Thyroid gland (tissue), 4 donors: ENCODE measurements at regions of chr22 and their contacts with region 1.

Region 1: GRCh38 chr22:50148991-50149721 is 21.4 kb upstream of the PANX2 start:
- DNase-seq: peak; percentile 52 to 57
- H3K4me3 ChIP-seq: no peak overlapping the region
- H3K27ac ChIP-seq: no peak overlapping the region
- H3K4me1 ChIP-seq: no peaks in the 10 kb centered on the region
- H3K27me3 ChIP-seq: no peaks in the 10 kb centered on the region
- CTCF ChIP-seq: peak; percentile 31 to 72 (median 62)
- POLR2A ChIP-seq: no peak

Region 2: GRCh38 chr22:49852898-49853894 is 296.0 kb before region 1 on chr22 and contains the start of gene ZBED4:
- intact Hi-C with region 1: no loop called
- DNase-seq: peak; percentile 97 to 98
- H3K4me3 ChIP-seq: peak within 1 kb of the TSS; percentile 65 to 91 (median 72)
- H3K27ac ChIP-seq: peak within 1 kb of the TSS; percentile 63 to 95 (median 91)
- H3K4me1 ChIP-seq: peaks cover 38% of the 10 kb centered on the region in 2 donors
- H3K27me3 ChIP-seq: peaks cover 18% of the 10 kb centered on the region
- CTCF ChIP-seq: no peak
- POLR2A ChIP-seq: peak in 1 of 2 donors; percentile 87
- total RNA-seq, gene ZBED4: 9.4 to 15.8 (median 10.1) TPM

Region 3: GRCh38 chr22:49937590-49938453 is 211.3 kb before region 1 on chr22:
- intact Hi-C with region 1: no loop called
- DNase-seq: peak; percentile 26 to 32
- H3K4me3 ChIP-seq: no peak overlapping the region
- H3K27ac ChIP-seq: peak overlapping the region; percentile 96 to 99 (median 96)
- H3K4me1 ChIP-seq: peaks cover 36 to 54% of the 10 kb centered on the region in 2 donors
- H3K27me3 ChIP-seq: no peaks in the 10 kb centered on the region
- CTCF ChIP-seq: no peak
- POLR2A ChIP-seq: no peak

Region 4: DNA sequence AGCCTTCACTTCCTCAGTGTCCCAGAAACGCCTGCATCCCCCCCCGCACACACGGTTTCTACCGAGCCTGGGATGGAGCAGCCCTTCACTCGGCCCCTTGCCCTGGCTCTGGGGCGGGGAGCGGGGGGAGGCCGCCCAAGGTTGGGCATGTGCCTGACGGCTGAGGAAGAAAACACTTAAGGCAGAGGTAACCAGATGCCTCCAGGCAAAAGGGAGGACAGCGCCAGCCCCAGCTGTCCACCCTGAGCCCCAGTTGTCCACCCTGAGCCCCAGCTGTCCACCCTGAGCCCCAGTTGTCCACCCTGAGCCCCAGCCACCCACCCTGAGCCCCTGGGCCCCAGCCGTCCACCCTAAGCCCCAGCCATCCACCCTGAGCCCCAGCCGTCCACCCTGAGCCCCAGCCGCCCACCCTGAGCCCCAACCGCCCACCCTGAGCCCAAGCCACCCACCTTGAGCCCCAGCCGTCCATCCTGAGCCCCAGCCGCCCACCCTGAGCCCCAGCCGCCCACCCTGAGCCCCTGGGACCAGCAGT is 87.3 kb before region 1 on chr22:
- intact Hi-C with region 1: no loop called
- DNase-seq: no peak
- H3K4me3 ChIP-seq: no peak overlapping the region
- H3K27ac ChIP-seq: no peak overlapping the region
- H3K4me1 ChIP-seq: peaks cover 12 to 16% of the 10 kb centered on the region in 2 donors
- H3K27me3 ChIP-seq: no peaks in the 10 kb centered on the region
- CTCF ChIP-seq: no peak
- POLR2A ChIP-seq: no peak

Region 5: DNA sequence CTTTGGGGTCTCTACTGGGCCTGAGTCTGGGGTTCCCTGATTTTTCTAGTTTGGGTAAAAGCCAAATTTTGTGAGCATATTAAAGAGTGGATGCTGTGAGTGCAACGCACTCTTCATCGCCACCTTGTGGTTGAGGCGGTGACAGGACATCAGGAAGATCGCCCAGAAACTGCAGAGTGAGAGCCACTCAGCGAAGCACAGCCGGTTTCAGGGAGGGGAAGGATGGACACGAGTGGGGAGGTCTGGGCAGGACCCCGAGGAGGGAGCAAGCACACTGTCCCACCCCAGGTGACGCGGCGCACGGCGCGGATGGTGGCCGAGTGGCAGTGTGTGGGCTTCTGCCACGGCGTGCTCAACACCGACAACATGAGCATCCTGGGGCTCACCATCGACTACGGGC is 60.7 kb after region 1 on chr22:
- intact Hi-C with region 1: loop called (anchors 2 kb)
- DNase-seq: peak; percentile 69 to 74
- H3K4me3 ChIP-seq: no peak overlapping the region
- H3K27ac ChIP-seq: no peak overlapping the region
- H3K4me1 ChIP-seq: no peaks in the 10 kb centered on the region
- H3K27me3 ChIP-seq: no peaks in the 10 kb centered on the region
- CTCF ChIP-seq: peak; percentile 72 to 87 (median 79)
- POLR2A ChIP-seq: no peak